Prostate gland (tissue), 2 donors: ENCODE measurements at regions of chr4 and their contacts with region 1.

Region 1: DNA sequence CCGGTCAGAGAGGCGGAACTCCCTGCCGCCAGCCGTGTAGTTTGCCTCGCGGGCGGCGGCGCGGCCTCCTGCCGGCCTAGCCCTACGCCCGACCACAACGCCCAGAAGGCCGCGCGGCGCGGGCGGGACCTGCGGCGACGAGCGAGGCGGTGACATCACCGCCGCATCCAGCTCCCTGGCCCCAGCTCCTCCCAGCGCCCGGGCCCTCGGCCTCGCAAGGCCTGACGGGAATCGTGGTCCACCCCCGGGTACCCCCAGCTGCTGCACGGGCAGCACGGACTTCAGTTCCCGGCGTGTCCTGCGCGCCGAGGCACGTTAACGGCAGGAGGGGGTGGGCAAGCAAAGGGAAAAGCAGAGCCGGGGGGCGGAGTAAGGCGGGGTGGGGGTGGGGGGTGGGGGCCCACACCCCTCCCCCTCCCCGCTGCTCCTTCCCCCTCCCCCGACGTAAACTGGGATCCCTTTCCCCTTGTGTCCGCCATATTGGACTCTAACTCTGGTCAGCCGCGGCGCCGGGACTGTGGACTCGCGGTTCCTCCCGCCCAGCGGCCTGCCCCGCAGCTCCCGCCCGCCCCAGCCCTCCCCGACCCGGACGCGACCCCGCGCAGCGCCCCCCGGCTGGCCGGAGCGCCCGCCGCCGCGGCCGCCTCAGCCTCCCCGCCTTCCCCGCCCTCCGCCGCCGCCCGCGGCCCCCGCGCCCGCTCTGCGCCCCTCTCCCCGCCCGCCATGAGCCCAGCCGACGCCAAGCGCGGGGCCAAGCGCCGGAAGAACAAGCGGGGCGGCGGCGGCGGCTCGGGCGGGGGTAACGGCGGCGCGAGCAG is at the start of gene FAM193A:
- DNase-seq: peak; percentile 99
- H3K4me3 ChIP-seq: peak within 1 kb of the TSS; percentile 54 to 89
- H3K27ac ChIP-seq: peak within 1 kb of the TSS; percentile 84 to 94
- H3K4me1 ChIP-seq: peaks cover 6% of the 10 kb centered on the region
- H3K27me3 ChIP-seq: no peaks in the 10 kb centered on the region
- CTCF ChIP-seq: peak in 2 of 4 experiments; percentile 24 to 49
- POLR2A ChIP-seq: peak; percentile 56
- total RNA-seq, gene FAM193A: 24.1 to 53.1 TPM

Region 2: GRCh38 chr4:2262143-2262943 is 274.1 kb before region 1 on chr4:
- intact Hi-C with region 1: loop called (anchors 10 kb)
- DNase-seq: peak; percentile 100
- H3K4me3 ChIP-seq: peak overlapping the region; percentile 61 to 88
- H3K27ac ChIP-seq: peak overlapping the region; percentile 91 to 93
- H3K4me1 ChIP-seq: peaks cover 33% of the 10 kb centered on the region
- H3K27me3 ChIP-seq: no peaks in the 10 kb centered on the region
- CTCF ChIP-seq: peak in 2 of 4 experiments; percentile 23 to 45
- POLR2A ChIP-seq: peak; percentile 87

Region 3: GRCh38 chr4:2468445-2469192 is 67.8 kb before region 1 on chr4 and contains the start of gene RNF4:
- intact Hi-C with region 1: loop called (anchors 1 kb)
- DNase-seq: peak; percentile 96
- H3K4me3 ChIP-seq: peak within 1 kb of the TSS; percentile 91 to 92
- H3K27ac ChIP-seq: peak within 1 kb of the TSS; percentile 87 to 93
- H3K4me1 ChIP-seq: no peaks in the 10 kb centered on the region
- H3K27me3 ChIP-seq: no peaks in the 10 kb centered on the region
- CTCF ChIP-seq: peak in 2 of 4 experiments; percentile 3 to 16
- POLR2A ChIP-seq: peak; percentile 64
- total RNA-seq, gene RNF4: 33.9 to 56.1 TPM

Region 4: GRCh38 chr4:2662598-2662997 is 126.2 kb after region 1 on chr4:
- intact Hi-C with region 1: no loop called
- DNase-seq: no peak
- H3K4me3 ChIP-seq: no peak overlapping the region
- H3K27ac ChIP-seq: no peak overlapping the region
- H3K4me1 ChIP-seq: peaks cover 6% of the 10 kb centered on the region
- H3K27me3 ChIP-seq: no peaks in the 10 kb centered on the region
- CTCF ChIP-seq: no peak
- POLR2A ChIP-seq: no peak

Region 5: DNA sequence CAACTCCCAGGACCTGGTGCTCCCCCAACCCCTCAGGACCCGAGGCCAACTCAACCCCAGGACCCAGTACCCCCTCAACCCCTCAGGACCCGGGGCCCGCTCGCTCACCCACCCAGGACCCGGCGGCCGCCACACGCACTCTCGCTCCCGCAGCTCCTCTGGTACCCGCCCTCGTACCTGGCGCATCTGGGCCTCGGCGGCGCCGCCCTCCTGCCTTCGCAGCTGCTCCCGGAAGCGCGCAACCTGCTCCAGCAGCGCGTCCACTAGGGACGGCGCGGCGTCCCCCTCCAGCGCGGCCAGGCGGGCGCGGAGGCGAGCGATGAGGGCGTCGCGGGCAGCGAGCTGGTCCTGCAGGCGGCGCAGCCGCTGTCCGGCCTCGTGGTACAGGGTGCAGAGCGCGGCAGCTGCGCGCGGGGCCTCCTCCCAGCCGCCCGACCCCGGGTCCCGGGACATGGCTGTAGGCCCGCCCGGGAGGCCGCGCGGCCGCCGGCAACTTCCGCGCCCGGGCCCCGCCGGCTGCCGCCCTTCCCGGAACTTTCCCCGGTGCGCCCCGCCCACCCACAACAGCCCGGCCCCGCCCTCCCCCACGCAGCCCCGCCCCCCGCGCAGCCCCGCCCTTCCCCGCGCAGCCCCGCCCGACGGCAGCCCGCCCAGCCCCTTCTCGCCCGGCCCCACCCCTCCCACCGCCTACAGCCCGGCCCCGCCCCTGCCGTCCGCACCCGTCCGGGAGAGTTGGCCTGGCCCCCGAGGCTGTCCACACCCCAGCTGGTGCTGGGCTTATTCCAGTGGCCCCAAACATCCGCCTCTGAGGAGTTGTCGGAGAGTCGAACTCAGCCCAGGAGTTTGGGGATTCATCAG is 219.7 kb after region 1 on chr4 and contains the start of gene TNIP2:
- intact Hi-C with region 1: loop called (anchors 5 kb)
- DNase-seq: peak; percentile 83
- H3K4me3 ChIP-seq: peak within 1 kb of the TSS; percentile 73 to 87
- H3K27ac ChIP-seq: peak within 1 kb of the TSS; percentile 79 to 87
- H3K4me1 ChIP-seq: peaks cover 3% of the 10 kb centered on the region
- H3K27me3 ChIP-seq: no peaks in the 10 kb centered on the region
- CTCF ChIP-seq: peak in 3 of 4 experiments; percentile 30 to 58 (median 56)
- POLR2A ChIP-seq: peak; percentile 70
- total RNA-seq, gene TNIP2: 54.8 to 94.0 TPM